ENCODE measurements at regions of chr2 and their contacts with region 1.

Region 1: GRCh38 chr2:166180951-166181812 is 53.4 kb upstream of the SCN1A start:
- DNase-seq: no peak
- H3K4me3 ChIP-seq: no peak overlapping the region
- CTCF ChIP-seq: peak; percentile 51

Region 2: DNA sequence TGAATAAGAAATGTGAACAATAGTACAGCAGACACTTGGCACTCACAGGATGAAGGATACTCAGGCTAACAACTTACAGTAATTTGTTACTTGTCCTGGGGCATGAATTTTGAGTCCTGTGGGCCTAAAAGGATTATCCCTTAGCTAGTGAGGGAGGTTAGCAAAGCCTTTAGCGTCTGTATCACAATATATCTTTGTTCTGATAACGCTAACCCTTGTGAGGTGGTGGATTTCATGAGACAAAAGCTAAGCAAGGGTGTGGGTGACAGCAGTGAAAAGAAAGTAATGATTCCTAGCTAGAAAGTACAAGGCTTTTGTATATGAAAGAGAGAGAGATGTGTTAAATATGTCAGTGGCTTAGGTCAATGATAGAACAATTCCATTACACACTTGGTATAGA is 180.8 kb before region 1 on chr2:
- CTCF ChIA-PET with region 1: no interaction called
- POLR2A ChIA-PET with region 1: no interaction called
- DNase-seq: no peak
- H3K4me3 ChIP-seq: no peak overlapping the region
- CTCF ChIP-seq: no peak

Region 3: DNA sequence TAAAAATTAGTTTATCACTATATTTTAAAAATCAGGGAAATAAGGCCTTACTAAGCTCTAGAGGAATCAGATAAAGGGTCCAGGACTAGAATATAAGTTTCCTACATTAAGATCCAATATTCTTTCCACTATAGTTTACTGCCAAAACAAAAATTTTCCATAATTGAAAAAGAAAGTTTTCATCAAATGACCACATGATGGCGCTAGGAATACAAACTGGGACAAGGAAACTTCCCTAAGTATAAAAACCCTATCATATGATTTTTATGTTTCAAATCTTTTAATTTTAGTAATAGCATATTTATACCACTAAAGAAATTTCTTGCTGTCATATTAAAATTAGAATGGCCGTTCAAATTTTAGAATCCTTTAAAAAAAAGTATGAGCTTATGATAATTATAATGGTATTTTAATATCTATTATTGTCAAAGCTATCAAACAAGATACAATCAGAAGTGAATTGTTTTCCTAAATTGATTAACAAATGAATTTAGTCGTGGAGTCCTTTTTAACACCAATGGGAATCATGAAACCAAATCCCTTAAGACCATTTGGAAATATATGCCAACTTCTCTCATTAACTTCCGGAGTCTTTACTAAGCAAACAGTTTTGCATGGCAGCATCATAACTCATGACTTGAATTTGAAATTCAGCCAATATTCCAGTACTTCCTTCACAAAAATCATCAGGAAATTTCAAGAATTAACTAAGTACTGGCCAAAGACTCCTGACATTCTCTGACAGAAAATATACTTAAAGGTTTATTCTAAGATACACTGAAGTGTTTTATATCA is 123.6 kb before region 1 on chr2:
- CTCF ChIA-PET with region 1: interaction called, 13 read pairs
- POLR2A ChIA-PET with region 1: no interaction called
- DNase-seq: no peak
- H3K4me3 ChIP-seq: no peak overlapping the region
- CTCF ChIP-seq: peak; percentile 22

Region 4: GRCh38 chr2:166193407-166193806 is 12.2 kb after region 1 on chr2:
- CTCF ChIA-PET with region 1: interaction called, 67 read pairs
- POLR2A ChIA-PET with region 1: no interaction called
- DNase-seq: no peak
- H3K4me3 ChIP-seq: no peak overlapping the region
- CTCF ChIP-seq: no peak

Region 5: GRCh38 chr2:166351319-166351718 is 170.1 kb after region 1 on chr2:
- CTCF ChIA-PET with region 1: no interaction called
- POLR2A ChIA-PET with region 1: no interaction called
- DNase-seq: peak; percentile 54
- H3K4me3 ChIP-seq: no peak overlapping the region
- CTCF ChIP-seq: no peak

Region 6: GRCh38 chr2:166384774-166385173 is 203.6 kb after region 1 on chr2:
- CTCF ChIA-PET with region 1: interaction called, 67 read pairs
- POLR2A ChIA-PET with region 1: no interaction called
- DNase-seq: no peak
- H3K4me3 ChIP-seq: no peak overlapping the region
- CTCF ChIP-seq: no peak

Region 7: GRCh38 chr2:166516712-166517303 is 335.6 kb after region 1 on chr2:
- CTCF ChIA-PET with region 1: interaction called, 102 read pairs
- POLR2A ChIA-PET with region 1: no interaction called
- DNase-seq: no peak
- H3K4me3 ChIP-seq: no peak overlapping the region
- CTCF ChIP-seq: peak; percentile 63

Measured in AG04449 (cell line).